B cell (primary cell): ENCODE measurements at regions of chr1 and their contacts with region 1.

Region 1: GRCh38 chr1:62746085-62746808 is 37.7 kb upstream of the ATG4C start:
- DNase-seq: peak; percentile 60
- ATAC-seq: no peak
- H3K4me3 ChIP-seq: no peak overlapping the region
- H3K4me3 Mint-ChIP-seq: no peak overlapping the region
- H3K27ac ChIP-seq: no peak overlapping the region
- H3K27ac Mint-ChIP-seq: no peak overlapping the region
- H3K4me1 ChIP-seq: no peaks in the 10 kb centered on the region
- H3K4me1 Mint-ChIP-seq: no peaks in the 10 kb centered on the region
- H3K27me3 ChIP-seq: no peaks in the 10 kb centered on the region
- H3K27me3 Mint-ChIP-seq: no peaks in the 10 kb centered on the region
- CTCF ChIP-seq: peak; percentile 78

Region 2: DNA sequence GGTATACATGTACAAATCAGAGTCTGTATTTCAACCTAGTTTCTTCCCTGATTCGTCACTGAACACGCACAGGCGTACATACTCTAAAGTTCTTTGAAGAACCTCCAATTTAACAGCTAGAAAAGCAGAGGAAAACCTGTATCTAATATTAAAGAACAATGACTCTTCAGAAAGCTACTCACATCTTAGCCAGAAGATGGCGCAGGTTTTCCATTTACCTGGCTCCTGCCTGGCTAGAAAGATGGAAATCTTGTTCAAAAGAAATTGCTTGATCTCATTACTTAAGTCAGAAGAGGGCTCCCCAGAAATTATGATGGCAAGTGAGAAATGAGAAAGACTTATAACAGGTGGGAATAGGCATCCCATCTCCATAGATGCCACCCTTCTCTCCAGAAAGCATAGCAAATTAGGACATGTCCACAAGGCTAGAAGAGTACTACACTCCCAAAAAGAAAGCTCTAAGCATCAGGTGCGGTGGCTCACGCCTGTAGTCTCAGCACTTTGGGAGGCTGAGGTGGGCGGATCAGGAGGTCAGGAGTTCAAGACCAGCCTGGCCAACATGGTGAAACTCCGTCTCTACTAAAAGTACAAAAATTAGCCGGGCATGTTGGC is 570.6 kb before region 1 on chr1:
- CTCF ChIA-PET with region 1: interaction called, 68 read pairs
- POLR2A ChIA-PET with region 1: no interaction called
- intact Hi-C with region 1: no loop called
- DNase-seq: peak; percentile 41
- ATAC-seq: no peak
- H3K4me3 ChIP-seq: no peak overlapping the region
- H3K4me3 Mint-ChIP-seq: no peak overlapping the region
- H3K27ac ChIP-seq: no peak overlapping the region
- H3K27ac Mint-ChIP-seq: no peak overlapping the region
- H3K4me1 ChIP-seq: no peaks in the 10 kb centered on the region
- H3K4me1 Mint-ChIP-seq: no peaks in the 10 kb centered on the region
- H3K27me3 ChIP-seq: no peaks in the 10 kb centered on the region
- H3K27me3 Mint-ChIP-seq: peaks cover 8% of the 10 kb centered on the region
- CTCF ChIP-seq: peak; percentile 74

Region 3: DNA sequence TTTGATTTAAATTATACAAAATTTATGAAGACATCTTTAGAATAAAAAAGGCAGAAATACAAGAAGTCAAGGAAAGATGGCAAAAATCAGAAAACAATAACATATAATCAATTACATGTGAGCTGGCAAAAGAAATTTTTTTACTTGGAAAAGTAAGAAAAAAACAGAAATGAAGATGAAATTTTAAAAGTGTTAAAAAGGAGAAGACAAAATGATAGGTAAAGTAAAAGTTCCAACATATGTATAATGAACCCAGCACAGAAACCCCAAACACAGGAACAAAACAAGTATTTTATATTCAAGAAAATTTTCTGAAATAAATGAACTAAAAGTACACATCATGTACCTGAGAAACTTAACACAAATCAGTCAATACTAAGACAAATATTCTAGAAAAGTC is 246.0 kb before region 1 on chr1:
- CTCF ChIA-PET with region 1: interaction called, 18 read pairs
- POLR2A ChIA-PET with region 1: no interaction called
- intact Hi-C with region 1: no loop called
- DNase-seq: no peak
- ATAC-seq: no peak
- H3K4me3 ChIP-seq: no peak overlapping the region
- H3K4me3 Mint-ChIP-seq: no peak overlapping the region
- H3K27ac ChIP-seq: no peak overlapping the region
- H3K27ac Mint-ChIP-seq: no peak overlapping the region
- H3K4me1 ChIP-seq: no peaks in the 10 kb centered on the region
- H3K4me1 Mint-ChIP-seq: no peaks in the 10 kb centered on the region
- H3K27me3 ChIP-seq: no peaks in the 10 kb centered on the region
- H3K27me3 Mint-ChIP-seq: no peaks in the 10 kb centered on the region
- CTCF ChIP-seq: no peak

Region 4: DNA sequence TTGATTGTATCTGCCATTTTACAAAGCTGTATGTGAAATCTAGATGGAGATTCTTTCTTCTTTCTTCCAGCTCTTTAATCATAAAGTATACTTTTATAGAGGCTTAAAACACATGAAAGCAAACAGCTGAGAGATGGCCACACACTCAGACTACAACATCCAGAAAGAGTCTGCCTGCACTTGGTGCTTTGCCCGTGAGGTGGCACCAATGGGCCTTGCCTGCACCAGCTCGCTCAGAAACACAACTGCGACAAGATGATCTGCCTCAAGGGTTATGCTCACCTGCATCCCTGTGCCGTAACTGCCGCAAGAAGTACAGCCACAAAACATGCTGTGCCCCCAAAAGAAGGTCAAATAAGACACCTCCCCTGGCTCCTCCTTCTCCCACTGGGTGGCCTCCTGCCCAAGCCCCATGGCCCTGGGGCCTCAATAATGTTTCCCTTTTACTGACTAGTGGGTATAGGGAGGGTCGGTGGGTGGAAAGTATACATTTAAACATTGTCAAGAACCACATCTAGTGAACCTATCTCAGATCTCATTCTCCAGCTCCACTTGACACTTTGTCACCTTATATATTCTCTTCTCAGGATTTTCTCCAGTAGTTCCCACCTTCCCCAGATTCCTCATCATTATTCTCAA is 215.6 kb before region 1 on chr1:
- CTCF ChIA-PET with region 1: interaction called, 28 read pairs
- POLR2A ChIA-PET with region 1: no interaction called
- intact Hi-C with region 1: no loop called
- DNase-seq: peak; percentile 16
- ATAC-seq: no peak
- H3K4me3 ChIP-seq: no peak overlapping the region
- H3K4me3 Mint-ChIP-seq: no peak overlapping the region
- H3K27ac ChIP-seq: no peak overlapping the region
- H3K27ac Mint-ChIP-seq: no peak overlapping the region
- H3K4me1 ChIP-seq: no peaks in the 10 kb centered on the region
- H3K4me1 Mint-ChIP-seq: no peaks in the 10 kb centered on the region
- H3K27me3 ChIP-seq: no peaks in the 10 kb centered on the region
- H3K27me3 Mint-ChIP-seq: no peaks in the 10 kb centered on the region
- CTCF ChIP-seq: peak; percentile 30

Region 5: GRCh38 chr1:62621907-62622306 is 124.3 kb before region 1 on chr1:
- CTCF ChIA-PET with region 1: no interaction called
- POLR2A ChIA-PET with region 1: no interaction called
- intact Hi-C with region 1: no loop called
- DNase-seq: no peak
- ATAC-seq: no peak
- H3K4me3 ChIP-seq: no peak overlapping the region
- H3K4me3 Mint-ChIP-seq: no peak overlapping the region
- H3K27ac ChIP-seq: no peak overlapping the region
- H3K27ac Mint-ChIP-seq: no peak overlapping the region
- H3K4me1 ChIP-seq: no peaks in the 10 kb centered on the region
- H3K4me1 Mint-ChIP-seq: peaks cover 10% of the 10 kb centered on the region
- H3K27me3 ChIP-seq: no peaks in the 10 kb centered on the region
- H3K27me3 Mint-ChIP-seq: no peaks in the 10 kb centered on the region
- CTCF ChIP-seq: no peak

Region 6: GRCh38 chr1:62676611-62677356 is 69.5 kb before region 1 on chr1:
- CTCF ChIA-PET with region 1: no interaction called
- POLR2A ChIA-PET with region 1: no interaction called
- intact Hi-C with region 1: no loop called
- DNase-seq: no peak
- ATAC-seq: no peak
- H3K4me3 ChIP-seq: no peak overlapping the region
- H3K4me3 Mint-ChIP-seq: no peak overlapping the region
- H3K27ac ChIP-seq: no peak overlapping the region
- H3K27ac Mint-ChIP-seq: no peak overlapping the region
- H3K4me1 ChIP-seq: no peaks in the 10 kb centered on the region
- H3K4me1 Mint-ChIP-seq: no peaks in the 10 kb centered on the region
- H3K27me3 ChIP-seq: no peaks in the 10 kb centered on the region
- H3K27me3 Mint-ChIP-seq: no peaks in the 10 kb centered on the region
- CTCF ChIP-seq: no peak

Region 7: GRCh38 chr1:62841587-62842169 is 95.4 kb after region 1 on chr1:
- CTCF ChIA-PET with region 1: interaction called, 13 read pairs
- POLR2A ChIA-PET with region 1: no interaction called
- intact Hi-C with region 1: no loop called
- DNase-seq: peak; percentile 70
- ATAC-seq: peak; percentile 62
- H3K4me3 ChIP-seq: no peak overlapping the region
- H3K4me3 Mint-ChIP-seq: no peak overlapping the region
- H3K27ac ChIP-seq: no peak overlapping the region
- H3K27ac Mint-ChIP-seq: no peak overlapping the region
- H3K4me1 ChIP-seq: no peaks in the 10 kb centered on the region
- H3K4me1 Mint-ChIP-seq: peaks cover 2% of the 10 kb centered on the region
- H3K27me3 ChIP-seq: no peaks in the 10 kb centered on the region
- H3K27me3 Mint-ChIP-seq: no peaks in the 10 kb centered on the region
- CTCF ChIP-seq: peak; percentile 88